ENCODE measurements at regions of chr21 and their contacts with region 1.

Region 1: DNA sequence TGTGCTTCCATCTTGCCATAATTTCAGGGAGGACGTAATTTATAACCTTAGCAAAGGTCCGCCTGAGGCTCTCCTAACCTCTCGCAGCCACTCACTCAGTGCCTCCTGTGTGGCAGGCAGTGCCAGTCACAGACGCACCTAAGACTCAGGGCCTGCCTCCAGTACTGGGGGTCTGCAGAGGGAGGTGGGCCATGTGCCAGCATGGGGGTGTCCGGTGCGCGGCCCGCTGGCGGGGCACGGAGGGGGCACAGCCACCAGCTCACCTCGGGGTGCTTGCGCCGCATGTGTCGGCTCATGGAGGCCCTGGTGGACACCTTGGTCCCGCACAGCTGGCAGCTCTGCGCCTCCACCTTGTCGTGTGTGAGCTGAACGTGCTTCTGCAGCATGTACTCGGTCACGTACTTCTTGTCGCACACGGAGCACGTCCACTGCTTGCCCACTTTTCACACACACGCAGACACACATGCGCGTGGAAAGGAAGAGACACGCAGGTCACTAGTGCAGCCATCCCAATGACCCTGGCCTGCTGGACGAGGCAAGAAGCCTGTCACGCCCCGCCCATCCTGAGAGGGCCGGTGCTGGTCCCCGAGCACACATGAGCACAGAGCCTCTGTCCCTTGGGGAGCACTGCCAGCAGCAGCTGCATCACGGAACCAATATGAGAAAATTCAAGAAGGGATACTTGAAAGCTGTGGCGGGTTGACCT is 43.2 kb upstream of the RIPK4 start:
- DNase-seq: no peak
- H3K4me3 ChIP-seq: no peak overlapping the region
- H3K27ac ChIP-seq: no peak overlapping the region
- H3K4me1 ChIP-seq: no peaks in the 10 kb centered on the region
- H3K27me3 ChIP-seq: no peaks in the 10 kb centered on the region
- CTCF ChIP-seq: no peak
- POLR2A ChIP-seq: no peak

Region 2: GRCh38 chr21:42002421-42002958 is 192.4 kb after region 1 on chr21:
- intact Hi-C with region 1: no loop called
- DNase-seq: no peak
- H3K4me3 ChIP-seq: no peak overlapping the region
- H3K27ac ChIP-seq: peak overlapping the region in 1 of 2 donors; percentile 37
- H3K4me1 ChIP-seq: no peaks in the 10 kb centered on the region
- H3K27me3 ChIP-seq: no peaks in the 10 kb centered on the region
- CTCF ChIP-seq: no peak
- POLR2A ChIP-seq: no peak

Region 3: DNA sequence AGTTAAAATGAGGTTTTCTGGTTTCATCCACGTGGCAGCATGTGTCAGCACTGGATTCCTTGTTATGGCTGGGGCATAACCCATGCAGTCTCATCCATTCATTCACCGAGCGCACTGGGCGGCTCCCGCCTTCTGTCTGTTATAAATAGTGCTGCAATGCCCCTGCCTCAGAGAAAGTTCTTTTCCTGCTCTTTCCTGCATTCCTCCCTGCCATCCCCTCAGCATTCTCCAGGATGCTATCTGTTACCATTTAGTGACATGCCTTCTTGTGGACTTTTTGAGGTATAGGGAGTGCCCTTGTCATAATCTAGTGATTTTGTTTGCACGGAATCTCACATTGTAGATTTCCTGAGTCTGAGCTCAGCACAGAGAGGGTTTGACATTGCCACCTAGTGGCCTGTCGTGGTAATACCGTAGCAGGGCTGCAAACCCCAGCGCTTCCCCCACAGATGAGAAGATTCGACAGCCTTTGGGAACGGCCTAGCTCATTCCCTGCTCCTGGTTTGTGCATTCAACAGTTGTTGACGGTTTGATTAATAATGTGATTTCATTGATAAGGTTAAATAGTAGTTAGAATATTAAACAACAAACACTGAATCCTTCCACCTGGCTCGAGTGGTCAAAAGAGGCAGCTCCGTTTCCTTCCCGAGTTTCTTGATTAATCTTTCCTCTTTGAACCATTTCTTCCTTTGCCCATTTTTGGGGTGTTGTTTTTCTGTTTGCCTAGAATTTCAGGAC is 307.4 kb after region 1 on chr21:
- intact Hi-C with region 1: loop called (anchors 5 kb)
- DNase-seq: peak; percentile 69 to 77
- H3K4me3 ChIP-seq: no peak overlapping the region
- H3K27ac ChIP-seq: no peak overlapping the region
- H3K4me1 ChIP-seq: no peaks in the 10 kb centered on the region
- H3K27me3 ChIP-seq: no peaks in the 10 kb centered on the region
- CTCF ChIP-seq: peak; percentile 90 to 94 (median 92)
- POLR2A ChIP-seq: no peak